Calu3 (cell line): ENCODE measurements at regions of chr19 and their contacts with region 1.

Region 1: GRCh38 chr19:38634757-38635482 is 12.5 kb upstream of the ACTN4 start:
- DNase-seq: peak; percentile 87
- H3K4me3 Mint-ChIP-seq: no peak overlapping the region
- H3K27ac Mint-ChIP-seq: peak overlapping the region; percentile 52
- H3K4me1 Mint-ChIP-seq: peaks cover 54% of the 10 kb centered on the region
- H3K27me3 Mint-ChIP-seq: no peaks in the 10 kb centered on the region
- CTCF ChIP-seq: peak; percentile 96

Region 2: GRCh38 chr19:38514812-38515633 is 119.9 kb before region 1 on chr19:
- CTCF ChIA-PET with region 1: interaction called, 7 read pairs
- intact Hi-C with region 1: loop called (anchors 2 kb)
- DNase-seq: peak; percentile 88
- H3K4me3 Mint-ChIP-seq: peak overlapping the region; percentile 34
- H3K27ac Mint-ChIP-seq: peak overlapping the region; percentile 18
- H3K4me1 Mint-ChIP-seq: no peaks in the 10 kb centered on the region
- H3K27me3 Mint-ChIP-seq: peaks cover 33% of the 10 kb centered on the region
- CTCF ChIP-seq: peak; percentile 95

Region 3: DNA sequence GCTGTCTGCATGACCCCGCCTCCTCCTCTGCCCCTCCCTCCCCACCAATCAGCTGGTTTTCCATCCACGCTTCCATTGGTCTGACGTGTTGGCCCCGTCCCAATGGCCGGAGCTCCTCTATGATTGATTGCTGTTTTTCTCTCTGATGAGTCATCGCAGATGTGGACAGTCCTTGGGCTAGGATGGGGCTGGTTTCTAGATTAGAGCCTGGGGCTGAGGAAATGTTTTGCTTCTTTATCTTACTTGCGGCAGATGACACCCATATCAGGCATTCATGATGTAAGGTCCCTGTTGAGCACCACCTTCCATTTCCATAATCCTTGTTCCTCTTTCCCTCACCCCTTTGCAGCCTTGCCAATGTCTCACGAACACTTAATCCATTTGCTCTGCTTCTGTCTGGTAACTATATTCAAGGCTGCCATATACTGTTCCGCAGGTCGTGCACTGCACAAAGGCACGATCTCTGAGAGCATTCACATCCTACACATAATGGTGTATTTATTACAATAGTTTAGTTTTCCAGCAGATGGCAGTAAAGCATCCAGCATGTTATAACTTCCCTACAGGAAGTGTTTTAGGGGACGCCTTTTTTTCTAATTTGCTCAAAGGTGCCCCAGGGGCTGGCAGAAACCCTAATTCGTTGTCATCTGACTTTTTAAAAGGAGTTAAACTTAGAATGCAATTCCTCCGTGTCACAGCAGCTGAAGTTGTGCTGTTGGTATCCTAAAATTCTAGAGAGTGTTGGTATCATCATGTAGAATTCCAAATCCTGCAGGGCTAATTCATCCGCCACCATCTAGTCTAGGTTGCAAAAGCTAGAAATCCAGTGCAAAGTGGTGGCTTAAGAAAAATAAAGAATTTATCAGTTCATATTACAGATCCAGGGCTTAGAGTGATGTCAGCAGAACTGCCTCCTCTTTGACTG is 90.6 kb before region 1 on chr19:
- CTCF ChIA-PET with region 1: interaction called, 14 read pairs
- intact Hi-C with region 1: loop called (anchors 1 kb)
- DNase-seq: peak; percentile 78
- H3K4me3 Mint-ChIP-seq: peak overlapping the region; percentile 34
- H3K27ac Mint-ChIP-seq: peak overlapping the region; percentile 13
- H3K4me1 Mint-ChIP-seq: peaks cover 20% of the 10 kb centered on the region
- H3K27me3 Mint-ChIP-seq: no peaks in the 10 kb centered on the region
- CTCF ChIP-seq: peak; percentile 54

Region 4: DNA sequence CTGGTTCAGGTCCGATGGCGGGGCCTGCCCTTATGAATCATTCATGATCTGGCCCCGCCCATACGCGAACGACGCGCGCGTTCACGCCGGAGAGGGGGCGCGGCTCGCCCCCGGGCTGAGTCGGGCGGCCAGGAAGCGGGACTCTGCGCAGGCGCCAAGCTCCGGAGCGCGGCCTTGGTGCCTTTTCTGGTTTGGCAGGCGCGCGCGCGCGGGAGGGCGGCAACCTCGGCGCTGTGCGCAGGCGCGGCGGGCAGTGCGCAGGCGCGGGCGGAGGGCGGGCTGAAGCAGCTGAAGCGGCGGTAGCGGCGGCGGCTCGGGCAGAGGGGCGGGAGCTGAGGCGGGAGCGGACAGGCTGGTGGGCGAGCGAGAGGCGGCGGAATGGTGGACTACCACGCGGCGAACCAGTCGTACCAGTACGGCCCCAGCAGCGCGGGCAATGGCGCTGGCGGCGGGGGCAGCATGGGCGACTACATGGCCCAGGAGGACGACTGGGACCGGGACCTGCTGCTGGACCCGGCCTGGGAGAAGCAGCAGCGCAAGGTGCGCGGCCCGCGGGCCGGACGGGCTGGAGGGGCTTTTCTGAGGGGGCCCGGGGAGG is 12.5 kb after region 1 on chr19 and contains the start of gene ACTN4:
- CTCF ChIA-PET with region 1: interaction called, 19 read pairs
- intact Hi-C with region 1: no loop called
- DNase-seq: peak; percentile 100
- H3K4me3 Mint-ChIP-seq: peak within 1 kb of the TSS; percentile 99
- H3K27ac Mint-ChIP-seq: peak within 1 kb of the TSS; percentile 100
- H3K4me1 Mint-ChIP-seq: no peaks in the 10 kb centered on the region
- H3K27me3 Mint-ChIP-seq: no peaks in the 10 kb centered on the region
- CTCF ChIP-seq: no peak
- total RNA-seq, gene ACTN4: 1,462 and 1,577 TPM in 2 replicates

Region 5: GRCh38 chr19:38929929-38930775 is 295.2 kb after region 1 on chr19 and contains the start of gene SARS2:
- CTCF ChIA-PET with region 1: interaction called, 5 read pairs
- intact Hi-C with region 1: loop called (anchors 5 kb)
- DNase-seq: peak; percentile 97
- H3K4me3 Mint-ChIP-seq: peak within 1 kb of the TSS; percentile 98
- H3K27ac Mint-ChIP-seq: peak within 1 kb of the TSS; percentile 93
- H3K4me1 Mint-ChIP-seq: peaks cover 23% of the 10 kb centered on the region
- H3K27me3 Mint-ChIP-seq: no peaks in the 10 kb centered on the region
- CTCF ChIP-seq: peak; percentile 99
- total RNA-seq, gene SARS2: 52.1 and 58.1 TPM in 2 replicates